PC-3 (cell line): ENCODE measurements at regions of chr16 and their contacts with region 1.

Region 1: DNA sequence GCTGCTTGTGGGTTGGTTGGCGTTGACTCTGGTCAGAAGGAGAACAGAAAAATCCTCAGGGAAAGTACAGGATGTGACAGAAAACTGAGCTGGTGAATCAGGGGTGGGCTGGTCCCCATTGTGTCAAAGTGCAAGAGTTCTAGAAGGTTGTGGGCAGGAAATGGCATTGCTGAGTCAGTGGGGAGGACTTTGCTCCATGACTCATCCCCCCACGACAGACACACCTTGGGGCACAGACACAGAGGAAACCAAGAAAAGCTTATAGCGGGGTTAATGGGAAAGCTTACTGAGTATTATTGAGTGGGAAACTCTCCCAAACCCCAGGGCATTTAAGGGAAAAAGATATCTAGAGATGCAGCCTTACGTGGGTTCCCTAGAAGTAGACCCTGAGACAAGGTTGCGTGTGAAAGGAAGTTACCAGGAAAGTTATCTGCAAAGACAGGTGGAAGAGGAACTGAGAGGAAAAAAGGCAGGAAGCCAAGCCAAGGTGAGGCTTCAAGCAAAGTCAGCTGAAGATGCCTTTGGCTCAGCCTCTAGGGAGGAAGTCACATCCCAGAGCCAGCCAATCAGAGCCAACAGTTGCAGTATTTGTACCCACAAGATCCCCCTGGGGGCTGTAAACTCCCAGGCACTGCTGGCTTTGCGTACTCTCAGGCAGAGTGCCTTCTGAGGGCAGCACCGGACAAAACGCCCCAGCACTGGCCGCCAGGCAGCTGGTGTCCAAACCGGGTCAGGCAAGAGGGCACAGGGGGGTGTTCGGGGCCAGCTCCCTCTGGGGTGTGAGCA is 86.4 kb downstream of the FOXL1 start:
- DNase-seq: peak; percentile 91
- ATAC-seq: peak; percentile 77
- H3K4me3 ChIP-seq: peak overlapping the region; percentile 34
- H3K27ac ChIP-seq: peak overlapping the region; percentile 99
- H3K4me1 ChIP-seq: peaks cover 32% of the 10 kb centered on the region
- H3K27me3 ChIP-seq: no peaks in the 10 kb centered on the region
- CTCF ChIP-seq: no peak

Region 2: GRCh38 chr16:86590501-86591144 is 74.1 kb before region 1 on chr16:
- CTCF ChIA-PET with region 1: no interaction called
- POLR2A ChIA-PET with region 1: interaction called, 4 read pairs
- intact Hi-C with region 1: loop called (anchors 2 kb)
- DNase-seq: peak; percentile 89
- ATAC-seq: peak; percentile 85
- H3K4me3 ChIP-seq: no peak overlapping the region
- H3K27ac ChIP-seq: peak overlapping the region; percentile 99
- H3K4me1 ChIP-seq: peaks cover 40% of the 10 kb centered on the region
- H3K27me3 ChIP-seq: no peaks in the 10 kb centered on the region
- CTCF ChIP-seq: no peak

Region 3: GRCh38 chr16:86634292-86634691 is 30.4 kb before region 1 on chr16:
- CTCF ChIA-PET with region 1: interaction called, 5 read pairs
- POLR2A ChIA-PET with region 1: interaction called, 4 read pairs
- intact Hi-C with region 1: loop called (anchors 1 kb)
- DNase-seq: peak; percentile 16
- ATAC-seq: no peak
- H3K4me3 ChIP-seq: no peak overlapping the region
- H3K27ac ChIP-seq: no peak overlapping the region
- H3K4me1 ChIP-seq: peaks cover 31% of the 10 kb centered on the region
- H3K27me3 ChIP-seq: no peaks in the 10 kb centered on the region
- CTCF ChIP-seq: no peak

Region 4: DNA sequence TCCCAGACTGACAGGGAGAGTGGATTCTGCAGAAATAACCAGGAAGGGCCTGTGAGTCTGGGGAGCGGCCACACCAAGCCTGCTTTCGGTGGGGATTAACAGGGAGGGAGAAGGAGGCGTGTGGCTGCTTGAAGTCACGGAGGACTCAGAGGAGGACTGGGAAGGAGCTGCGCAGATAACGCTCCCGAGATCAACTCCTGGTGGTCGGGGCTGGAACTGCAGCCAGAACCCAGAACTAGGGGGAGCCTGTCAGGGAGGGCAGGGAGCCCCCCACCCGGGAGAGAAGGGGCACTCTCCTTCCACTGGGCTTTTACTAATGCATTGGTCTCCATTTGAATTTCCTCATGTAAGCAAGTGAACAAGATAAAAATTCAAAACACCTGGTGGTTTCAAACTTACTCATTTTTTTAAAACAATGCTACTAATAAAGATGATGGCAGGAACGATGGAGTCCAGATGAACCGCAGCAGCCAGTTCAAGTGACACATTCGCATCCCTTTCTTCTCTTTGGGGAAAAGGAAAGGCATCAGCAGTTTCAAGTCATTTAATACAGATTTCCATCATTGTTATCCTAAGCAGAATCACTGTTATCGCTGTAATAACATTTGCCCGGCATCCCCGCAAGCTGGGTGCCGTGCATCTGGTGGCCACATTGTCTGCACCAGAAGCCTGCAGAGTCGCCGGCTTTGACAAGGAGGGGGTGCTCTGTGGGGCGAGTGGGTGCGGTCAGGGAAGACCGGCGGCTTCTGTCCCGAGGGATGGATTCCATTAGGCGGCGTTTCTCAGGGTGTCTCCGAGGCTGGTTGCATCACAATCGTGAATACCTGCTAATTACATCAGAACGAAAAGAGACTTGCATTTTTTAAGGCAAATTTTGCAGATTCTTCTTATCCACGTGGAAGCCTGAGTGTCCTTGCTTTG is 96.6 kb after region 1 on chr16:
- CTCF ChIA-PET with region 1: no interaction called
- POLR2A ChIA-PET with region 1: no interaction called
- intact Hi-C with region 1: loop called (anchors 10 kb)
- DNase-seq: peak; percentile 60
- ATAC-seq: peak; percentile 67
- H3K4me3 ChIP-seq: no peak overlapping the region
- H3K27ac ChIP-seq: no peak overlapping the region
- H3K4me1 ChIP-seq: no peaks in the 10 kb centered on the region; the same call in 1 of the 2 replicates
- H3K27me3 ChIP-seq: no peaks in the 10 kb centered on the region
- CTCF ChIP-seq: peak; percentile 73